Right ventricle myocardium inferior (tissue), 1 donor: ENCODE measurements at regions of chr17 and their contacts with region 1.

Region 1: GRCh38 chr17:75430159-75430974 is 24.9 kb upstream of the GRB2 start:
- DNase-seq: no peak
- ATAC-seq: peak; percentile 16

Region 2: GRCh38 chr17:75468291-75468754 is 38.0 kb after region 1 on chr17:
- intact Hi-C with region 1: no loop called
- DNase-seq: no peak
- ATAC-seq: peak; percentile 41

Region 3: GRCh38 chr17:75515496-75516254 is 85.3 kb after region 1 on chr17 and contains the start of gene CASKIN2:
- intact Hi-C with region 1: loop called (anchors 1 kb)
- DNase-seq: peak; percentile 96
- ATAC-seq: peak; percentile 94
- total RNA-seq, gene CASKIN2: 39.1 TPM

Region 4: GRCh38 chr17:75524953-75525719 is 94.8 kb after region 1 on chr17 and contains the start of gene LLGL2:
- intact Hi-C with region 1: loop called (anchors 2 kb)
- DNase-seq: peak; percentile 92
- ATAC-seq: peak; percentile 85
- total RNA-seq, gene LLGL2: 4.1 TPM

Region 5: DNA sequence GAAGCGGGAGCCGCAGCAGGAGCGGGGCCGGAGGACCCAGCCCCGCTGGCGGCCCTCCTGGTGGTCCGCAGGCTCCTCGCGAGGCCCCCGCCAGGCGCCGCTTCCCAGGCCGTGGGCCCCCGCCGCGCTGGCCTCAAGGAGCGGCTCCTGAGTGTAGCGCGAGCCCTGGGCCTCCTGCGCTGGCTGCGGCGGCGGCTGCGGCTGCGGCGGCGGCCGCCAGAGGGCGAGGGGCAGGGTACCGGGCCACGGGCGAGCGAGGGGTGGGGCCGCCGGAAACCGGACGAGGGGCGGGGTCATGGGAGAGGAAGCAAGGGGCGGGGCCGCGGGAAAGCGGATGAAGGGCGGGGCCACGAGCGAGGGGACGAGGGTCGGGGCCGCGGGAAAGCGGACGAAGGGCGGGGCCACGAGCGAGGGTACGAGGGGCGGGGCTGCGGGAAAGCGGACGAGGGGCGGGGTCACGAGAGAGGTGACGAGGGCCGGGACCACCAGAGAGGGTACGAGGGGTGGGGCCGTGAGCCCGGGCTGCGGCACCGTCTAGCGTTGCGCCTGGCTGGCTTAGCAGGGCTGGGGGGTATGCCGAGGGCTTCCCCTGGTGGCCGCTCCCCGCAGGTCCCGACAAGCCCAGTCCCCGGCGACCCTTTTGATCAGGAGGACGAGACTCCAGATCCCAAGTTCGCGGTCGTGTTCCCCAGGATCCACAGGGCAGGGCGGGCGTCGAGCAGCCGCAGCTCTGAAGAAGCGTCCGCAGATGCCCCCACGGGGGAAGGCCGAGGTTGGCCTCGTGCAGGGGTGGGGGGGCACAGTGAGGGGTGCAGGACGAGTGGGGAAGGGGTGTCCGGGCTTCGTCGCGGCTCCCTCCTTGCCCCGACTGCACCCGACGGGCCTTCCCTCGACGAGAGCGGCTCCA is 158.9 kb after region 1 on chr17:
- intact Hi-C with region 1: loop called (anchors 5 kb)
- DNase-seq: peak; percentile 99
- ATAC-seq: peak; percentile 92

Region 6: GRCh38 chr17:75749545-75750389 is 319.4 kb after region 1 on chr17:
- intact Hi-C with region 1: loop called (anchors 10 kb)
- DNase-seq: peak; percentile 95
- ATAC-seq: peak; percentile 68